Activated CD4-positive, alpha-beta T cell treated with anti-CD3 and anti-CD28 coated beads for 36 hours (primary cell): ENCODE measurements at regions of chr22 and their contacts with region 1.

Region 1: DNA sequence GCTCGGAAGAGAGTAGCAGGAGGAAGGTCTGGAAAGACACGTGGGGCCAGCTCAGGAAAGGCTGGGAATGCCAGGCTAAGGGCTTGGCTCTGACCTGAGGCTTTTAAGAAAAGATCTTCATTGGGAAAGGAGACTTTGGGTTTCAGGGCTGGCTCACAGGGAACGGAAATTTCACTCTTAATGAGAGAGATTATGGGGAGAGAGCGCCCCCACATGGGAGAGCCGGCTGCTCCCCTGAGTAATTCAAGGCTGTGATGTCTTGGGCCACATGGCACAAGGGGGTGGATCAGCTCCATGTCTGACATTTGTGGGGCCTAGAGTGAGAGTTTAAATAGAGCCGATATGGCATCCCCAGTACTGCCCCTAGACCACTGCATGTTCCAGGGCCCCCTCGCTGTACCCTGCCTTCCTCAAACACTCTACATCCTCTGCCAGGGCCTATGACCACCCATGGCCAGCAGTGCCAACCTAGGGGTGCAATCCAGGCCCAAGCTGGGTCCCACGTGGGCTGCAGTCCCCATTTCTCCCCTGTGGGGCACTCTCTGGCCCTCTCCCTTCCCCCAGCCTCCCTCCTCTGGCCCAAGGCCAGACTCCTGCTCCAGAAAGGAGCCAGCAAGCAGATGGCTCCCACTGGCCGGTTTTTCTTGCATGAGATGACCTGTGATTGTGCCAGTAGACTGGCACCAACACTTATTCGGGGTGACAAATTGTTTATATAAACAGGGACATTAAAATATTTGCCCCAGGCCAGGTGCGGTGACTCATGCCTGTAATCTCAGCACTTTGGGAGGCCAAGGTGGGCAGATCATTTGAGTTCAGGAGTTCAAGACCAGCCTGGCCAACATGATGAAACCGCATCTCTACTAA is 75.2 kb downstream of the ISX start:
- DNase-seq: peak; percentile 36
- ATAC-seq: no peak
- H3K4me3 Mint-ChIP-seq: no peak overlapping the region
- H3K27ac Mint-ChIP-seq: no peak overlapping the region
- H3K4me1 Mint-ChIP-seq: no peaks in the 10 kb centered on the region
- H3K27me3 Mint-ChIP-seq: peaks cover 6% of the 10 kb centered on the region

Region 2: GRCh38 chr22:34847072-34847471 is 294.0 kb before region 1 on chr22:
- CTCF ChIA-PET with region 1: no interaction called
- POLR2A ChIA-PET with region 1: no interaction called
- intact Hi-C with region 1: loop called in 1 of 2 experiments (anchors 10 kb)
- DNase-seq: no peak
- ATAC-seq: peak; percentile 47
- H3K4me3 Mint-ChIP-seq: no peak overlapping the region
- H3K27ac Mint-ChIP-seq: no peak overlapping the region
- H3K4me1 Mint-ChIP-seq: peaks cover 4% of the 10 kb centered on the region
- H3K27me3 Mint-ChIP-seq: peaks cover 20% of the 10 kb centered on the region

Region 3: GRCh38 chr22:34966980-34967565 is 174.0 kb before region 1 on chr22:
- CTCF ChIA-PET with region 1: no interaction called
- POLR2A ChIA-PET with region 1: no interaction called
- intact Hi-C with region 1: no loop called
- DNase-seq: no peak
- ATAC-seq: no peak
- H3K4me3 Mint-ChIP-seq: no peak overlapping the region
- H3K27ac Mint-ChIP-seq: no peak overlapping the region
- H3K4me1 Mint-ChIP-seq: no peaks in the 10 kb centered on the region
- H3K27me3 Mint-ChIP-seq: peaks cover 4% of the 10 kb centered on the region

Region 4: GRCh38 chr22:35568751-35569725 is 427.9 kb after region 1 on chr22:
- CTCF ChIA-PET with region 1: no interaction called
- POLR2A ChIA-PET with region 1: no interaction called
- intact Hi-C with region 1: no loop called
- DNase-seq: no peak
- ATAC-seq: no peak
- H3K4me3 Mint-ChIP-seq: no peak overlapping the region
- H3K27ac Mint-ChIP-seq: no peak overlapping the region
- H3K4me1 Mint-ChIP-seq: no peaks in the 10 kb centered on the region
- H3K27me3 Mint-ChIP-seq: no peaks in the 10 kb centered on the region